ENCODE measurements at regions of chr15 and their contacts with region 1.

Region 1: DNA sequence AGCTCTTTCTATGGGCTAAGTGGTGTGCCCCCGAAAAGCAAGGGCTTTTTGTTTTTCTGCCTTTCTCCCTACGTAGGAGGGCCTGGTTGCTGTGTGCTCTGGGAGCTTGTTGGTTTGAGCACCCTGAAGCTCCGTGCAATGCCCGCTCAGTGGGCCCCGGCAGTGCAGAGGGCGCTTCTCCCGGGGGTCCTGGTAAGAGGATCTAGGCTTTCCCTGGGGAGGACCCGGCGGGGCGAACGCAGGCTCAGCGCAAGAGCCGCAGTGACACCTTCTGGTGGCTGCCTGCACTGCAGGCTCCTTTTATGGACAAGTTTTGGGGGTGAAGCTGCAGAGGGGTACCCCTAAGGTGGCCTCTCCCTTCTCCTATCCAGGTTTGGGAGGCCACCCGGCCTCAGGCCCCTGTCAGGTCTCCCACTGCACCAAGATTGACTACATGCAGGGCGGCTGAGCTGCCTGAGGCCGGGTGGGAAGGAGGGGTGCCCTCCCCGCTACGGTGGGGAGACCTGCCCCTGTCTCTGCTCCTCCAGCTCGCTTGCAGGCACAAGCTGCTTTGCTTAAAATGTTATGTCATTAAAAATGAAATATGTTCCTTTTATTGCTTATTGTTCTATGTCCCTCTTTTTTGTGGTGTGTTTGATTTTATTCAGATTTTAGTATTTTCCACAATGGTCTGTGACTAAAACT is 387.9 kb downstream of the GABRG3 start:
- DNase-seq: peak in 4 of 5 donors; percentile 29 to 72 (median 58)
- H3K4me3 ChIP-seq: peak overlapping the region in 1 of 3 donors; percentile 39
- H3K27ac ChIP-seq: no peak overlapping the region
- H3K4me1 ChIP-seq: no peaks in the 10 kb centered on the region
- H3K27me3 ChIP-seq: no peaks in the 10 kb centered on the region
- CTCF ChIP-seq: peak; percentile 78

Region 2: DNA sequence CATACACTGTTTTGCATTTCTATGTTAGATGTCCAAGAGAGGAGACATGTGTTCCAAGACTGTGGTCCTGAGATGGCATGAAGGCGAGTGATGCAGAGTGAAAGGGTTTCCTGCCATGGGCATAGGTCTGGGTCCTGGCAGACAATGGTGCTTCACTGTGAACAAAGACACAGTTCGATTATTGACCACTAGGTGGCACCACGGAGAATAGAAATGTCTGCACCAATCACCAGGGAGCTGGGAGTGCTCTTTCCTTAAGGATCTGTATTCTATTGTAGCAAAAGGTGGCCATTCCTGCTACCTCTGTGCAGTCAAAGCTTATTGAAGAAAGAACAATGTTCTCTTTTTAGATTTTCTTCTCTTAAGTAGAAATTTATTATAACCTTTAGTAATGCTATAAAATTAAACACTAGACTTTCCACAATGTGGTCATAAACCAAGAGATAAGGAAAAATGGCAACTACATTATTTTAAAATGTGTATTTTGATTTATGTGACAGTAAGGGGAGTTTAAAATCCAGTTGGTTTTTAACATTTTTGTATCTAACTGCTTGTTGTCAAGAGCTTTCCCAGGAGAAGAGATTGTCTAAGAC is 299.2 kb before region 1 on chr15:
- intact Hi-C with region 1: loop called (anchors 10 kb)
- DNase-seq: peak in 4 of 5 donors; percentile 57 to 79 (median 63)
- H3K4me3 ChIP-seq: no peak overlapping the region
- H3K27ac ChIP-seq: no peak overlapping the region
- H3K4me1 ChIP-seq: peaks cover 0 to 3% (median 0%) of the 10 kb centered on the region in 3 donors
- H3K27me3 ChIP-seq: no peaks in the 10 kb centered on the region
- CTCF ChIP-seq: peak; percentile 66

Region 3: GRCh38 chr15:28132524-28133275 is 773.8 kb after region 1 on chr15:
- intact Hi-C with region 1: no loop called
- DNase-seq: no peak
- H3K4me3 ChIP-seq: no peak overlapping the region
- H3K27ac ChIP-seq: no peak overlapping the region
- H3K4me1 ChIP-seq: no peaks in the 10 kb centered on the region
- H3K27me3 ChIP-seq: no peaks in the 10 kb centered on the region
- CTCF ChIP-seq: no peak

Measured in kidney (tissue), 22 donors.